Activated B cell treated with CpG ODN at 0.5 μM for 24 hours (primary cell): ENCODE measurements at regions of chr1 and their contacts with region 1.

Region 1: GRCh38 chr1:173714759-173715537 is at the start of gene KLHL20:
- DNase-seq: peak; percentile 71
- ATAC-seq: peak; percentile 96
- H3K4me3 Mint-ChIP-seq: peak within 1 kb of the TSS; percentile 93
- H3K27ac Mint-ChIP-seq: peak within 1 kb of the TSS; percentile 89
- H3K4me1 Mint-ChIP-seq: peaks cover 22% of the 10 kb centered on the region
- H3K27me3 Mint-ChIP-seq: peaks cover 14% of the 10 kb centered on the region
- CTCF ChIP-seq: no peak
- total RNA-seq, gene KLHL20: 19.6 and 26.1 TPM in 2 replicates

Region 2: GRCh38 chr1:173476664-173477285 is 238.2 kb before region 1 on chr1:
- CTCF ChIA-PET with region 1: no interaction called
- POLR2A ChIA-PET with region 1: interaction called, 22 read pairs
- intact Hi-C with region 1: loop called (anchors 1 kb)
- DNase-seq: peak; percentile 70
- ATAC-seq: peak; percentile 94
- H3K4me3 Mint-ChIP-seq: peak overlapping the region; percentile 92
- H3K27ac Mint-ChIP-seq: peak overlapping the region; percentile 95
- H3K4me1 Mint-ChIP-seq: peaks cover 40% of the 10 kb centered on the region
- H3K27me3 Mint-ChIP-seq: no peaks in the 10 kb centered on the region
- CTCF ChIP-seq: no peak

Region 3: GRCh38 chr1:173779936-173780335 is 65.0 kb after region 1 on chr1:
- CTCF ChIA-PET with region 1: no interaction called
- POLR2A ChIA-PET with region 1: no interaction called
- intact Hi-C with region 1: no loop called
- DNase-seq: no peak
- ATAC-seq: no peak
- H3K4me3 Mint-ChIP-seq: no peak overlapping the region
- H3K27ac Mint-ChIP-seq: no peak overlapping the region
- H3K4me1 Mint-ChIP-seq: no peaks in the 10 kb centered on the region
- H3K27me3 Mint-ChIP-seq: no peaks in the 10 kb centered on the region
- CTCF ChIP-seq: no peak